Dendritic cell treated with granulocyte-macrophage colony-stimulating factor and Interleukin-4, amounts not matched to agents 40 ng/mL and 50 ng/mL, for 4 days (primary cell): ENCODE measurements at regions of chr10 and their contacts with region 1.

Region 1: DNA sequence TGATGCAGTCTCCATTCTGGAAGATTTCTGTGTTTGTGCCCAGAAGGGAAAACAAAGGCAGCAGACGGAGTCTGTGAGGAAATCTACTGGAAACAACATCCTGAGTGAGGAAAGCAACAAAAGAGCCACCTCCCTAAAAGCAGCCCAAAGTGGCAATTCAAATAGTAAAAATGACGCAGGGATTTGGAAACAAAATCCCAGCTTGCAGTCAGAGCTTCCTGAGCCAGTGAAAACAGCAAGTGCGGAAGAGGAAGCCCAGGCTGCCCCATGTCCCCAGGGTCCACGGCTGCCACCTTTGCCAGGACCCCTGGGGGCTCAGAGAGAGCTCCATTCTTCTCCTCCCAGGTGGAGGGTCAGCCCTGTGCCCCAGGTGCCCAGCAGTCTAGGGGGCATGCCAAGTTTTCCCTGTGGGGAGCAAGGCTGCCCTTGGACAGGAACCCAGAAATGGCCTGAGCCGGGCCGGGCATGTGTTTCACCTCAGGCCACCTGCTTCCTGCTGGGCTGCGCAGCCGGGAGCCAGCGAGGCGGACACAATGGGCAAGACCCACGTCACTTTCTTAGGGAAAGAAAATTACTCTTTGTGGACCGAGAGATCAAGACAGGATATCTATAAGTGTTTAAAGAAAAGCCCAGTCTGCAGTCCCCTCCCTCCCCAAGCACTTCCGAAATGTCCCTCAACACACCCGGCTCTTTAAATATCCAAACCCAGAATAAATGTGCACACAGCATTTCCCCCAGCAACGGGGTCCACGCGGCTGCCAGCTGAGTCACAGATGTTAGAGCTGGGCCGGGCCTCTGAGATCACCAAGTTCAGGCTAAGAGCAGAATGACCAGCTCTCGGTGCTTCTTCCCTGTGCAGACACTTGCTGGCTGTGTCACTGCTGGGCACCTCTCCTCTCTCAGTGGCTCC is 231.1 kb downstream of the ARHGAP12 start:
- H3K4me3 Mint-ChIP-seq: no peak overlapping the region
- H3K27ac Mint-ChIP-seq: peak overlapping the region; percentile 81
- H3K4me1 Mint-ChIP-seq: peaks cover 64% of the 10 kb centered on the region
- H3K27me3 Mint-ChIP-seq: no peaks in the 10 kb centered on the region

Region 2: GRCh38 chr10:30980951-30981616 is 716.4 kb before region 1 on chr10:
- intact Hi-C with region 1: no loop called
- H3K4me3 Mint-ChIP-seq: no peak overlapping the region
- H3K27ac Mint-ChIP-seq: no peak overlapping the region
- H3K4me1 Mint-ChIP-seq: peaks cover 10% of the 10 kb centered on the region
- H3K27me3 Mint-ChIP-seq: no peaks in the 10 kb centered on the region

Region 3: GRCh38 chr10:31318854-31319601 is 378.5 kb before region 1 on chr10 and contains the start of gene ZEB1:
- intact Hi-C with region 1: no loop called
- H3K4me3 Mint-ChIP-seq: peak within 1 kb of the TSS; percentile 83
- H3K27ac Mint-ChIP-seq: peak within 1 kb of the TSS; percentile 38
- H3K4me1 Mint-ChIP-seq: peaks cover 34% of the 10 kb centered on the region
- H3K27me3 Mint-ChIP-seq: peaks cover 54% of the 10 kb centered on the region

Region 4: DNA sequence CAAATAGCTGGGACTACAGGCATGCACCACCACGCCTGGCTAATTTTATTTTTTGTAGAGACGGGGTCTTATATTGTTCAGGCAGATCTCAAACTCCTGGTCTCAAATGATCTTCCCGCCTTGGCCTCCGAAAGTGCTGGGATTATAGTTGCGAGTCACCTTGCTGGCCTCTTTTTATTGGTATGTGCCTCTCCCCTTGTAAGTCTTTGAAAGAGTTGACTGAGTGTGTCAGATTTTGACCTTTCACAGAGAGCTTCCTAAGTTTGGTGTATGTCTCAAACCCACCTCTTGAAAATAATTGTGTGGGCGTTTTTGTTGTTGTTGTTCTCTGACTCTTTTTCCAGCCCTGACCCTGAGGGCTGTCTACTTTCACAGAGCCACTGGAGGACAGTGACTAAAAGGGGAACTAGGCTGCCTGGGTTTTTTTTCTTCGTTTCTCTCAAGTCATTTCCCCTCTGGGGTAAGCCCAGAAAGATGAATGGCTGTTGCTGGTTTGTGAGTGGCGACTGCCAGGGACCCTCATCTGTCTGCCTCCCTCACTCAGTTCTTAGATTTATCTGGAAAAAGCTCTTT is 115.7 kb before region 1 on chr10:
- intact Hi-C with region 1: loop called (anchors 5 kb)
- H3K4me3 Mint-ChIP-seq: peak overlapping the region; percentile 34
- H3K27ac Mint-ChIP-seq: peak overlapping the region; percentile 87
- H3K4me1 Mint-ChIP-seq: peaks cover 63% of the 10 kb centered on the region
- H3K27me3 Mint-ChIP-seq: no peaks in the 10 kb centered on the region